HEK293 (cell line): ENCODE measurements at regions of chr10 and their contacts with region 1.

Region 1: GRCh38 chr10:87861953-87862678 is 1.2 kb downstream of the KLLN start:
- H3K4me3 ChIP-seq: peak overlapping the region; percentile 60
- H3K27ac ChIP-seq: peak overlapping the region; percentile 99
- H3K4me1 ChIP-seq: peaks cover 12% of the 10 kb centered on the region; the same call in 1 of the 2 replicates
- CTCF ChIP-seq: no peak

Region 2: GRCh38 chr10:87817609-87818504 is 44.3 kb before region 1 on chr10 and contains the start of gene ATAD1:
- CTCF ChIA-PET with region 1: no interaction called
- POLR2A ChIA-PET with region 1: interaction called, 30 read pairs
- H3K4me3 ChIP-seq: peak within 1 kb of the TSS; percentile 76
- H3K27ac ChIP-seq: peak within 1 kb of the TSS; percentile 99
- H3K4me1 ChIP-seq: peaks cover 13% of the 10 kb centered on the region; the same call in 1 of the 2 replicates
- CTCF ChIP-seq: peak; percentile 65

Region 3: GRCh38 chr10:87850742-87851205 is 11.3 kb before region 1 on chr10:
- CTCF ChIA-PET with region 1: interaction called, 13 read pairs
- POLR2A ChIA-PET with region 1: interaction called, 29 read pairs
- H3K4me3 ChIP-seq: no peak overlapping the region
- H3K27ac ChIP-seq: no peak overlapping the region
- H3K4me1 ChIP-seq: peaks cover 17% of the 10 kb centered on the region
- CTCF ChIP-seq: peak; percentile 59; the same call in 1 of the 2 replicates

Region 4: DNA sequence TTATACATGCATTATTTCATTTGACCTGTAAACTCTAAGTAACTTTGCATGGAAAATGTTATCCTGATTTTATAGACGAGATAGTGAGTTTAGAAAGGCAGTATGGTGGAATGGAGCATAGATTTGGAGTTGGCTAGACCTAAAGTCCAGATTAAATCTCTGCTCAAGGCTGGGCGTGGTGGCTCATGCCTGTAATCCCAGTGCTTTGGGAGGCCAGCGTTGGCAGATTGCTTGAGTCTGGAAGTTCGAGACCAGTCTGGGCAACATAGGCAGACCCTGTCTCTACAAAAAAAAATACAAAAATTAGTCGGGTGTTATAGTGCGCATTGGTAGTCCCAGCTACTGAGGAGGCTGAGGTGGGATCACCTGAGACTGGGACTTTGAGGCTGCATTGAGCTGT is 10.7 kb after region 1 on chr10:
- CTCF ChIA-PET with region 1: interaction called, 4 read pairs
- POLR2A ChIA-PET with region 1: interaction called, 17 read pairs
- H3K4me3 ChIP-seq: no peak overlapping the region
- H3K27ac ChIP-seq: no peak overlapping the region
- H3K4me1 ChIP-seq: peaks cover 23% of the 10 kb centered on the region
- CTCF ChIP-seq: no peak

Region 5: GRCh38 chr10:88386821-88387773 is 525.0 kb after region 1 on chr10:
- CTCF ChIA-PET with region 1: interaction called, 4 read pairs
- POLR2A ChIA-PET with region 1: interaction called, 10 read pairs
- H3K4me3 ChIP-seq: no peak overlapping the region
- H3K27ac ChIP-seq: peak overlapping the region; percentile 60
- H3K4me1 ChIP-seq: peaks cover 27% of the 10 kb centered on the region
- CTCF ChIP-seq: no peak